MCF 10A (cell line): ENCODE measurements at regions of chr7 and their contacts with region 1.

Region 1: DNA sequence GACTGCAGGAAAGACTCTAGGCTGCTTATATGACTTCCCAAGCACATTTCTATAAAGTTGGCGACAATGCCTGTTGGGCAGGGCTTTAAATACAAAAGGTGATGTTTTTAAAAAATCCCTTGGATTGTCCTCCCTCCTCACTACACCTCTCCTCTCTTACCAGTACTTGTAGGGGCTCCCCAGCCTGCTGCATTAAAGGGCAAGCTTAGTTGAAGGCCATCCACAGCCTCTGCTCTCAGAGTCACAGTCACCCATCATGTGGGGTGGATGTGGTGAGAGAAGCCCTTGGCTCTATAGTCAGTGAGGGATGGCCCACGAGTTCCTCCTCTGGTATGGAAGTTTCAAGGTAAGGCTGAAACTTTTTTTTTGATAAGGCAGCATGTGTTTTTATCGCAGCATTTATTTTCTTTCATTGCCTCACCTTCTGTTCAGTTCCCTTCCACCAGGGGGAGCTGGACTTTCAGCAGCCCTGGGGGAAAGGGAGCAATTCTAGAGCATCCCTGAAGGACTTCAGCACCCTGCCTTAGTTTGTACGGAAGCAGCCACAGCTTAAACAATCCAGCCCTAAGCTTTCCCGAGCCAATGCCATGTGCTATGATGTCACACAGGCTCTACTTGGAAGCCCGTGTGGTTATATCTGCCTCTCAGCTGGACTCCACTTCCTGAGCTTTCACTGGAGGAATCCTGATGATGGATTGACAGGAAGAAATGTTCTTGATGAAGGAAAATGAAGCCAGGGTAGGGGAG is 131.9 kb downstream of the CALCR start:
- DNase-seq: peak; percentile 58
- H3K4me3 Mint-ChIP-seq: no peak overlapping the region
- H3K27ac Mint-ChIP-seq: no peak overlapping the region
- H3K4me1 Mint-ChIP-seq: no peaks in the 10 kb centered on the region
- H3K27me3 Mint-ChIP-seq: peaks cover 91% of the 10 kb centered on the region
- CTCF ChIP-seq: peak; percentile 66

Region 2: DNA sequence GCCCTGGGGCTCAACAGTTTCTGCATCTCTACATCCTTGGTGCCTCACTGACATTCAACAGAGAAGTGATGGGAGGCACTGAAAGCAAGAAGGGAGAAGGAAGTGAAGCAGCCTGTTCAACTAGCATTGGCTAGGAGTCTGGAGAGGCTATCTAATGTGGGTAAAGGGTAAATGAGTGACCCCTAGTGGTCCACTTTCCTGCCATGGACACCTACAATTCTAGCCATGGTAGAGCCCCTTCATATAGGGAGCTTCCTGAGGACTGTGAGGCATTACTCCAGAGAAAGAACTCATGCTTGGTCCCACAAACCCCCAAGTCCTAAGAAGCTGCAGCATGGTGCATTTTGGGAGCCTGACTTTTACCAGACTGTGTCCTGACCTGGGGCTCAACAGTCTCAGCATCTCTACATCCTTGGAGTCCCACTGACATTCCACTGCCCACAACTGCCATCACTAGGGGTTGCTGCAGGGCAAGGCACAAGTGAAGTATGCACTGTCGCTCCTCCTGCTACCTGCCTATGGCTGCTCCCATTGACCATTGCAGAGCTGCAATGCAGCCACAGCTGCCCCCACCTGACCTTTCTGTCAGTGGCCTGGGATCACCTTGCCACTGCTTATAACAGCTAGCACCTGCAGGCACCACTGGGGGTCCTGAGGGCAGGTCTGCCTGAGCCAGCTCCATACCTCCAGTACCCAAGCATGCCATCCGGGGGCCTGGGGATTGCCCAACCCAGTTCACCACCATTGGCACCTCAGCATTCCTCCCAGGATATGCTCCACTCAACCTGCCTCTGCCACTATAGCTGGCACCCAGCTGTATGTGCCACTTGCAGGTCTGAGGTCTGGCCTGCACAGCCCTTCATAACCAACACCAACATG is 562.2 kb before region 1 on chr7:
- CTCF ChIA-PET with region 1: no interaction called
- POLR2A ChIA-PET with region 1: no interaction called
- intact Hi-C with region 1: no loop called
- DNase-seq: peak; percentile 42
- H3K4me3 Mint-ChIP-seq: no peak overlapping the region
- H3K27ac Mint-ChIP-seq: no peak overlapping the region
- H3K4me1 Mint-ChIP-seq: peaks cover 2% of the 10 kb centered on the region
- H3K27me3 Mint-ChIP-seq: no peaks in the 10 kb centered on the region
- CTCF ChIP-seq: no peak

Region 3: GRCh38 chr7:93092757-93093370 is 349.8 kb before region 1 on chr7:
- CTCF ChIA-PET with region 1: no interaction called
- POLR2A ChIA-PET with region 1: no interaction called
- intact Hi-C with region 1: no loop called
- DNase-seq: peak; percentile 56
- H3K4me3 Mint-ChIP-seq: no peak overlapping the region
- H3K27ac Mint-ChIP-seq: no peak overlapping the region
- H3K4me1 Mint-ChIP-seq: no peaks in the 10 kb centered on the region
- H3K27me3 Mint-ChIP-seq: peaks cover 95% of the 10 kb centered on the region
- CTCF ChIP-seq: peak; percentile 72

Region 4: DNA sequence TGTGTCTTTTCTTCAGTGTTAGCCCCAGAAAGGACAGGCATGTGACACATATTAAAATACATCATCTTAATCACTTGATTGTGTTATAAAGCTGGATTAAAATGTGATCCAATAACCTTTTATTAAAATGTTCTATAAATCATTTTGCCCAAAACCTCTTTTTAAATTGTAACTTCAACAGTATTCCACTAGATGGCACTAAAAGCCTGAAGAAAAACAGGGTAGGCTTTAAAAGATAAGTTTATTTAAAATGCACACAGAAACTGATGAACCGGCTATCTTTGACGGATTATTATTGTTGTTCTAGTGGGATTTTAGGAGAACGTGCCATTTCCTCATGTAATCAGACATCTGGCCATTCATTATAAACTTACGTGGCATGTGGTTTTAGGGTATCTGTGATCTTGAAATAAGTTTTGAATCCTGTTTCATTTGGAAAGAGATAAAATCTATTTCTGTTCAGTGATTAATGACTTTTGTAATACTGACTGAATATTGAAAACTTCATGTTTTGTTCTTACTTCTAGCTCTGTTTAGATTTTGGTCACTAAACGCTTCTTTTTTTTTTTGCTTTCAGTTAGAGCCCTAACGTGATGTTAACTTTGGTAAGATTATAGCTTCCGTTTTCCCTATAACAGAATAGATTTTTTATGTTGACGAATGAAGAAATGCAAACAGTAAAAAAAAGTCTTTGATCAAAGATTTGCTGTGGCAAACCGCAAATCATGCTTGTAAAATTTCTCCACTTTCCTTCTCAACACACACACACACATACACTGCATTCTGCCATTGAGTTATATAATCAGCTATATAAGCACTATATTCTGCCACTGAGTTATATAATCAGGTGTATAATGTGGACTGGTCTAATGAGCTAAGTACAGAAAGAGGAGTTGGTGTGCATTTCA is 196.9 kb before region 1 on chr7:
- CTCF ChIA-PET with region 1: no interaction called
- POLR2A ChIA-PET with region 1: no interaction called
- intact Hi-C with region 1: loop called (anchors 2 kb)
- DNase-seq: peak; percentile 34
- H3K4me3 Mint-ChIP-seq: no peak overlapping the region
- H3K27ac Mint-ChIP-seq: no peak overlapping the region
- H3K4me1 Mint-ChIP-seq: no peaks in the 10 kb centered on the region
- H3K27me3 Mint-ChIP-seq: no peaks in the 10 kb centered on the region
- CTCF ChIP-seq: peak; percentile 40

Region 5: GRCh38 chr7:93453264-93453663 is 10.6 kb after region 1 on chr7:
- CTCF ChIA-PET with region 1: interaction called, 13 read pairs
- POLR2A ChIA-PET with region 1: no interaction called
- intact Hi-C with region 1: no loop called
- DNase-seq: no peak
- H3K4me3 Mint-ChIP-seq: no peak overlapping the region
- H3K27ac Mint-ChIP-seq: no peak overlapping the region
- H3K4me1 Mint-ChIP-seq: no peaks in the 10 kb centered on the region
- H3K27me3 Mint-ChIP-seq: peaks cover 100% of the 10 kb centered on the region
- CTCF ChIP-seq: no peak

Region 6: DNA sequence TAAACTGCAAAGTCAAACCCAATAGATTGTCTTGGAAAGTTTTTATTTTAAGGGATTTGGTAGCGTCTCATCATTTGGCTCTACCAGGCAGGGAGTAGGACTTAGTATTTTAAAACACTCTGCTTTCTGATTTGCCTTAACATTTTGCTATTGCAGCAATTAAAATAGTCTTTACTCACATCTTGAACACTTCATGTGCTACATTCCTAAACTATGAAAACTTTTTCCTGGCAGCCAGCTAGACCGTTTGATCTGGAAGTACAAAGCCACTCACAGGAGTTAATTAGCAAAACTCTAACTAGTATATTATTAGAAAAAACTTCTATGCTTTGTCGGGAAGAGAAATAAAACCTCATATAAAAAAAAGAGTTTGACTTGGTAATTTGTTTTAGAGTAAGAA is 336.5 kb after region 1 on chr7:
- CTCF ChIA-PET with region 1: no interaction called
- POLR2A ChIA-PET with region 1: no interaction called
- intact Hi-C with region 1: no loop called
- DNase-seq: no peak
- H3K4me3 Mint-ChIP-seq: no peak overlapping the region
- H3K27ac Mint-ChIP-seq: no peak overlapping the region
- H3K4me1 Mint-ChIP-seq: no peaks in the 10 kb centered on the region
- H3K27me3 Mint-ChIP-seq: no peaks in the 10 kb centered on the region
- CTCF ChIP-seq: no peak